GM12878 (cell line): ENCODE measurements at regions of chr12 and their contacts with region 1.

Region 1: DNA sequence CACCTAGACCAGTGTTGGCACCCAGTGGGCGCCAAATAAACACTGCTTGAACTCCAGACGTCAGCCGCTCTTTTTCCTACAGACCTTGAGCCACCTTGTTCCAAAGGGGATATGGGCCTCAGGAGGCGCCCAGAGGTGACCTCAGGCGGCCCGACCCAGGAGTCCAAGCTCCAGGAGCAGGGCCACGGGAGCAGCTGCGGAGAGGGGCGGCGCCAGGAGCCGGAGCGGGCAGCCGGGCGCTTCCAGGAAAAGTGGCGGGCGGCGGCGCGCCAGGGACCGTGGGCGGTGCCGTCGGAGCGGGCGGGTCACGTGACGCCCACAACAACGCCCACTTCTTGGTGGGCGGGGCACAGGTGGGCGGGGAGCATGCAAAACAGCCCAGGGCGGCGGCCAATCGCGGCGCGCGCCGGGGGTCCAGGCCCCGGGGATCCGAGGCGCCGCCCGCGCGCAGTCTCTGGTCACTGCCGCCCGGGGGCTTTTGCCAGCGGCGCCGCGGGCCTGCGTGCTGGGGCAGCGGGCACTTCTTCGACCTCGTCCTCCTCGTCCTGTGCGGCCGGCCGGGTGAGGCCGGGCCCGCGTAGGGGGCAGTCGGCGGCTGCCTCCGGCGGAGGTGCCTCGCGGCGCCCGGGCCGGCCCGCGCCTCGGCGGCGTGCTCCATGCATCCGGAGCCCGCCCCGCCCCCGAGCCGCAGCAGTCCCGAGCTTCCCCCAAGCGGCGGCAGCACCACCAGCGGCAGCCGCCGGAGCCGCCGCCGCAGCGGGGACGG is at the start of gene ORAI1:
- DNase-seq: peak; percentile 63
- ATAC-seq: peak; percentile 75
- H3K4me3 ChIP-seq: peak within 1 kb of the TSS; percentile 83
- H3K27ac ChIP-seq: peak within 1 kb of the TSS; percentile 92
- H3K4me1 ChIP-seq: peaks cover 19% of the 10 kb centered on the region
- H3K27me3 ChIP-seq: no peaks in the 10 kb centered on the region
- CTCF ChIP-seq: peak in 1 of 3 experiments; percentile 31; a peak in 1 of 6 replicates
- EP300 ChIP-seq: no peak
- POLR2A ChIP-seq: peak; percentile 85
- RAD21 ChIP-seq: no peak
- polyA plus RNA-seq, gene ORAI1: 5.5 to 6.1 TPM

Region 2: DNA sequence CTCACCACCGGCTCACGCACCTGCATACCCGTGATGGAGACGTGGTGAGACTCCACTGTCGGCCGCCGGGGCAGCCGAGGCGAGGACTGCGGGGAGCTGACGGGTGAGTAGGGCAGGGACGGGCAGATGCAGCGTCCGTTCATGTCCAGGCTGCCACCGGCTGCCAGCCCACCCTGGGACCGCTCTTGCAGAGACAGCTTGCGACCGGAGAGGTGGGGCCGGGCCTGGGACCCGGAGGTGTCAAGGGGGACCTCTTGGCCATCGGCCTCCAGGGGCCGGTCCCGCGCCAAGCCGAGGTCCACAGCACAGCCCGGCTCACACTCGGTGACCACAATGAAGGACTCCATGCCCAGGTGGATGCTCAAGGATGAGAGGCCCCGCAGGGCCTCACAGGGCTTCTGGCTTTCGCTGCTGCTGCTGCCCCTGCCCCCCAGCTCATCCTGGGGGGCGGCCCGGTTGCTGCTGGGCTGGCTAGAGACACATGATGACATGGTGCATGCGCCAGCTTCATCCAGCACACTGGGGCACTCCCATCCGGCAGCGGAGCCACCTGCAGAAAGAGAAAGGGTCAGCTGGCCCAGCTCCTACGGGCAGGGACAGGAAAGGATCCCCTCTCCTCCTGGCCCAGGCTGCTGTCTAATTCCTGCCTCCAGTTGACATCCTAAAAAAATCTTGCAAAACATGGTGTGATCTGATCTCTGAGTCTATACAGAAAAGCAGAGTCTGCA is 352.1 kb before region 1 on chr12:
- CTCF ChIA-PET with region 1: no interaction called
- POLR2A ChIA-PET with region 1: no interaction called
- RAD21 ChIA-PET with region 1: no interaction called
- SMC1A ChIA-PET with region 1: no interaction called
- in situ Hi-C with region 1: no loop called
- intact Hi-C with region 1: no loop called
- DNase-seq: no peak
- ATAC-seq: no peak
- H3K4me3 ChIP-seq: no peak overlapping the region
- H3K27ac ChIP-seq: no peak overlapping the region
- H3K4me1 ChIP-seq: peaks cover 4% of the 10 kb centered on the region
- H3K27me3 ChIP-seq: no peaks in the 10 kb centered on the region
- CTCF ChIP-seq: no peak
- EP300 ChIP-seq: no peak
- POLR2A ChIP-seq: 0 out of 2 replicates have a peak, but pooled peaks have one; percentile 26
- RAD21 ChIP-seq: no peak

Region 3: DNA sequence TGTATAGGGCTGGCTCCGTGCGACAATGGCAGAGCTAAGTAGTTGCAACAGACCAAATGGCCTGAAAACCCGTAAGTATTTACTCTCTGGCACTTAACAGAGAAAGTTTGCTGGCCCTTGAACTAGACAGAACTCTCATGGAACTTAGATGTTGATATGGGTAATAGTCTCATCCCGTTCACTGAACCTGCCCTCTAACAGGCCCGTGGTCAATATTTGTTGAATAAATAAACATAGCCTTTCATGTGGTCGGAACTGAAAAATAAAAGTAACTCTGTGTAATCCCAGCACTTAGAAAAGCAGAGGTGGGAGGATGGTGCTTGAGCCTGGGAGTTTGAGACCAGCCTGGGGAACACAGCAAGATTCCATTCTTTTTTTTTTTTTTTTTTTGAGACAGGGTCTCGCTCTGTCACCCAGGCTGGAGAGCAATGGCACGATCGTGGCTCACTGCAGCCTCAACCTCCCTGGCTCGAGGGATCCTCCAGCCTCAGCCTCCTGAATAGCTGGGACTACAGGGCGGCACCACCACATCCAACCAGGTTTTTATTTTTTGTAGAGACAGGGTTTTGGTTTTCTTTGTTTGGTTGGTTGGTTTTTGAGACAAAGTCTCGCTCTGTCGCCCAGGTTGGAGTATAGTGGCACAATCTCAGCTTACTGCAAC is 75.2 kb before region 1 on chr12:
- CTCF ChIA-PET with region 1: interaction called, 80 read pairs
- POLR2A ChIA-PET with region 1: interaction called, 20 read pairs
- RAD21 ChIA-PET with region 1: interaction called, 57 read pairs
- SMC1A ChIA-PET with region 1: interaction called, 60 read pairs
- in situ Hi-C with region 1: no loop called
- intact Hi-C with region 1: loop called (anchors 1 kb)
- DNase-seq: no peak
- ATAC-seq: peak; percentile 23
- H3K4me3 ChIP-seq: no peak overlapping the region
- H3K27ac ChIP-seq: no peak overlapping the region
- H3K4me1 ChIP-seq: peaks cover 25% of the 10 kb centered on the region
- H3K27me3 ChIP-seq: no peaks in the 10 kb centered on the region
- CTCF ChIP-seq: no peak
- EP300 ChIP-seq: no peak
- POLR2A ChIP-seq: no peak
- RAD21 ChIP-seq: no peak

Region 4: GRCh38 chr12:121637231-121637914 is 11.1 kb after region 1 on chr12:
- CTCF ChIA-PET with region 1: interaction called, 10 read pairs
- POLR2A ChIA-PET with region 1: interaction called, 16 read pairs
- RAD21 ChIA-PET with region 1: interaction called, 17 read pairs
- SMC1A ChIA-PET with region 1: interaction called, 19 read pairs
- in situ Hi-C with region 1: no loop called
- intact Hi-C with region 1: no loop called
- DNase-seq: no peak
- ATAC-seq: peak; percentile 90
- H3K4me3 ChIP-seq: 0 out of 2 replicates have a peak overlapping the region, but pooled peaks have one; percentile 17
- H3K27ac ChIP-seq: peak overlapping the region; percentile 84
- H3K4me1 ChIP-seq: peaks cover 20% of the 10 kb centered on the region
- H3K27me3 ChIP-seq: no peaks in the 10 kb centered on the region
- CTCF ChIP-seq: no peak
- EP300 ChIP-seq: no peak
- POLR2A ChIP-seq: peak; percentile 71
- RAD21 ChIP-seq: no peak

Region 5: GRCh38 chr12:121663610-121663929 is 37.3 kb after region 1 on chr12:
- CTCF ChIA-PET with region 1: interaction called, 32 read pairs
- POLR2A ChIA-PET with region 1: interaction called, 13 read pairs
- RAD21 ChIA-PET with region 1: interaction called, 61 read pairs
- SMC1A ChIA-PET with region 1: interaction called, 19 read pairs
- in situ Hi-C with region 1: no loop called
- intact Hi-C with region 1: loop called (anchors 2 kb)
- DNase-seq: no peak
- ATAC-seq: no peak
- H3K4me3 ChIP-seq: no peak overlapping the region
- H3K27ac ChIP-seq: peak overlapping the region; percentile 99
- H3K4me1 ChIP-seq: peaks cover 20% of the 10 kb centered on the region
- H3K27me3 ChIP-seq: no peaks in the 10 kb centered on the region
- CTCF ChIP-seq: no peak
- EP300 ChIP-seq: no peak
- POLR2A ChIP-seq: no peak
- RAD21 ChIP-seq: no peak

Region 6: DNA sequence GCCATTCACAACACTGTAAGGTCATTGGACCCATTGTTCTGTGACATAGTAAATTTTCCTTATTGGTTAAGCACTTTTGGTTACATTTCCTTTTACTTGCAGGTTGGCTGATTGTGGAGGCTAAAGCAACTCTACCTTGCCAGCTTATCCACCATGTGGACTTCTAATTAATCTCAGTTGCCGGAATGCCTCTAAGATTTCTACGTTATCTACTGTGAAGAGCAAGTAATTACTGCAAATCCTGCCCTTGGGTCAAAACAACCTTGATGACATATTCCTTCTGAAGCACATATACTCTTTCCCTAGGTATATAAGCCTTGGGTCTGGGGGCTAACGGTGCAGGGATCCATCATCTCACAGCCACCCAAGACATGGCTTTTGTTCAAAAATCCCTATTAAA is 62.7 kb after region 1 on chr12:
- CTCF ChIA-PET with region 1: interaction called, 14 read pairs
- POLR2A ChIA-PET with region 1: interaction called, 18 read pairs
- RAD21 ChIA-PET with region 1: interaction called, 17 read pairs
- SMC1A ChIA-PET with region 1: interaction called, 7 read pairs
- in situ Hi-C with region 1: no loop called
- intact Hi-C with region 1: no loop called
- DNase-seq: no peak
- ATAC-seq: no peak
- H3K4me3 ChIP-seq: no peak overlapping the region
- H3K27ac ChIP-seq: no peak overlapping the region
- H3K4me1 ChIP-seq: no peaks in the 10 kb centered on the region; the same call in 1 of the 2 replicates
- H3K27me3 ChIP-seq: no peaks in the 10 kb centered on the region
- CTCF ChIP-seq: no peak
- EP300 ChIP-seq: no peak
- POLR2A ChIP-seq: no peak
- RAD21 ChIP-seq: no peak